ENCODE measurements at regions of chr6 and their contacts with region 1.

Region 1: DNA sequence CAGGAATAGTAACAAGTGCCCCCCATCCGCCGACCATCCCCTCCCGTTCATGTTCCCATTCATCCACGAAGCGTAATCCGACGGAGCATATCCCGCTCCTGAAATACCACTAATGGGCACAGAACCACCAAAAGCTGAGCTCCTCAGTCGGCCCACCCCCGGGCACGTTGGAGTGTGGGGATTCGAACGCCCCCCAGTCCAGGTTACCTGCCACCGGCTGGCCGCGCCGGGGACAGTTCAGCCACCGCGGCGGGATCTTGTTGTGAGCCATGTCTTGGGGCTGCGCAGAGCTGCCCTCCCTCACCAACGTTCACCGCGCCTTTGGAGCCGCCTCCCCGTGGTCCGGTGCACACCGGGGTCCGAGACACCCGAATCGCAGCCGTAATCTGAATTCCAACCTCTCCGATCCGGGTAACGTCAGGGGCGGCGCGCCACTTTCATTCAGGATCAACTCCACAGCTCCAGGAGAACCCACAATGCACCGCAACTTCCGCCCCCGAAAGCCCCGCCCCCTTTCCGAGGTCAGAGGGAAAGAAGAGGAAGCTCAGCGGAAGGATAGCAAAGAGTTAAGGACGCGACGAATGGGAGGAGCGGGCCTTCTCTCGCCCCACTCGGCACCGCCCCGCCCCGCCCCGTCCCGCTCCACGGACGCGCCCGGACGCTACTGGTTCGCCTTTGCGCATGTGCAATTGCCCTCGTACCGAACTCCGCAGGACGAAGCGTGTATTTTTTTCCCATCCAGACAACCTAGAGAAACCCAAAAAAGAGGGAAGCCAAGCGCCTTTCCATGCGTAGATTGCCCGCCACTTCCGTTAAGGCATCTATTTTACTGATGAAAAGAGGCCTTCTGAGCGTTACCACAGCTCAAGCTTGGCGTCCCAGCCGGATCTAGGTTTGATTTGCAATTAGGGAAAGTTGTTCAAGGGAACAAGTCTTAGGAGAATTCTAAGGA is at the start of gene RNGTT:
- DNase-seq: peak; percentile 97
- H3K4me3 ChIP-seq: peak within 1 kb of the TSS; percentile 95
- H3K27ac ChIP-seq: peak within 1 kb of the TSS; percentile 43
- H3K4me1 ChIP-seq: peaks cover 19% of the 10 kb centered on the region
- CTCF ChIP-seq: 0 out of 2 replicates have a peak, but pooled peaks have one; percentile 31
- total RNA-seq, gene RNGTT: 38.5 and 41.7 TPM in 2 replicates

Region 2: DNA sequence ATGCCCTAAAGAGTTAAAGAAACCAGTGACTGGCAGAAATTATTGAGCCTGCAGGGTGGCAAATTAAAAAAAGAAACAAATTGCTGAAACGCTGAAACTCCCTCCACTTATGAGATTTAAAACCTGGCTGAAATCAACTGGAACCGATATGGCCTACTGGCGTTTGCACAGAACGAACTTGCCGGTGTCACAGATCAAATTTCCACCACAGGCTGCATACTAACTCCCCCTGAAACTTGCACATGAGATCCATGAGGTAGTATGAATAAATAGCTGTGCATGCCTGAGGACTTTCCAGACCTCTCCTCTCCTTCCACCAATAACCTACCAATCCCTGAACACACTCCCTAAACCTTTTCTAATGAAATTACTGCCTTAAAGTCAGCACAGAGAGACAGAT is 150.4 kb before region 1 on chr6:
- CTCF ChIA-PET with region 1: no interaction called
- POLR2A ChIA-PET with region 1: no interaction called
- intact Hi-C with region 1: no loop called
- DNase-seq: no peak
- H3K4me3 ChIP-seq: no peak overlapping the region
- H3K27ac ChIP-seq: no peak overlapping the region
- H3K4me1 ChIP-seq: no peaks in the 10 kb centered on the region
- CTCF ChIP-seq: no peak

Region 3: DNA sequence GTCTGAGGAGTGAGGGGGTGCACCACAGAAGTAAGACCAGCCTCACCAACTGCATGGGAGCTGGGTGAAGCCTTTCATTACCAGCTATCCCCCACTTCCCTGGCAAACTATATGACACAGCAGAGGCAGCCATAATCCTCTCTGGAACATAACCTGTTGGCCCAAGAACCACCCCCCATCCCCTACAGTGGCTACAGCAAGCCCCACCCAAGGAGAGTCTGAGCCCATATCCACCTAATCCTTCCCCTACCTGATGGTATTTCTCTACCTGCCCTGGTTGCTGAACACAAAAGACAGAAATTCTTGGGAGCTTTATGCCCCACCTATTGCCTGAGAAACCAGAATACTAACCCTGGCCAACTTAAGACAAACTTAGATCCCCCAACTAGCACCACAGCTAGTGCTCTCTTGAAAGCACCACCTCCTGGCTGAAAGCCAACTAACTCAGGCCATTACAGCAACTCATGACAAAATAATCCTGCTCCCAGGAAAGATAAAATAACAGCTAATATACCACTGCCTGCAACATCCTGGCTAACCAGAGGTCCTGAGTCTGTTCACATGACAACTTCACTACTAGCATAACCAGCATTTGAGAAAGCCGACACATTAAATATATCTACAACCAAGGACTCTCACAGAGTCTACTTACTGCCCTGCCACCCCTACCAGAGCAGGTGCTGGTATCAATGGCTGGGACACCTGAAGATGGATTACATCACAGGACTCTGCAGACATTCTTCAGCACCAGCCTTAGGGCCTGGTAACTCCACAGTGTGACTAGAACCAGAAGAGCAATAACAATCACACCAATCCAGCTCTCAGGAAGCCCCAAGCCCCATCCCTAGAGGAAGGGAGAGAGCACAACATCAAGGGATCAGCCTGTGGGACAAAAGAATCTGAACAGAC is 11.1 kb before region 1 on chr6:
- CTCF ChIA-PET with region 1: no interaction called
- POLR2A ChIA-PET with region 1: interaction called, 12 read pairs
- intact Hi-C with region 1: no loop called
- DNase-seq: no peak
- H3K4me3 ChIP-seq: no peak overlapping the region
- H3K27ac ChIP-seq: no peak overlapping the region
- H3K4me1 ChIP-seq: no peaks in the 10 kb centered on the region
- CTCF ChIP-seq: no peak

Measured in OCI-LY7 (cell line).